CD8-positive, alpha-beta T cell (primary cell): ENCODE measurements at regions of chr10 and their contacts with region 1.

Region 1: GRCh38 chr10:132536971-132537712 is 445 bp upstream of the INPP5A start:
- DNase-seq: peak; percentile 99 to 100 (median 100)
- ATAC-seq: peak; percentile 89
- H3K4me3 ChIP-seq: peak overlapping the region; percentile 23 to 65
- H3K4me3 Mint-ChIP-seq: peak overlapping the region; percentile 79
- H3K27ac ChIP-seq: peak overlapping the region; percentile 39 to 56
- H3K27ac Mint-ChIP-seq: peak overlapping the region; percentile 75
- H3K4me1 ChIP-seq: peaks cover 49% of the 10 kb centered on the region
- H3K4me1 Mint-ChIP-seq: peaks cover 49% of the 10 kb centered on the region
- H3K27me3 ChIP-seq: peaks cover 0 to 2% of the 10 kb centered on the region in 2 experiments
- H3K27me3 Mint-ChIP-seq: no peaks in the 10 kb centered on the region
- CTCF ChIP-seq: peak; percentile 27

Region 2: DNA sequence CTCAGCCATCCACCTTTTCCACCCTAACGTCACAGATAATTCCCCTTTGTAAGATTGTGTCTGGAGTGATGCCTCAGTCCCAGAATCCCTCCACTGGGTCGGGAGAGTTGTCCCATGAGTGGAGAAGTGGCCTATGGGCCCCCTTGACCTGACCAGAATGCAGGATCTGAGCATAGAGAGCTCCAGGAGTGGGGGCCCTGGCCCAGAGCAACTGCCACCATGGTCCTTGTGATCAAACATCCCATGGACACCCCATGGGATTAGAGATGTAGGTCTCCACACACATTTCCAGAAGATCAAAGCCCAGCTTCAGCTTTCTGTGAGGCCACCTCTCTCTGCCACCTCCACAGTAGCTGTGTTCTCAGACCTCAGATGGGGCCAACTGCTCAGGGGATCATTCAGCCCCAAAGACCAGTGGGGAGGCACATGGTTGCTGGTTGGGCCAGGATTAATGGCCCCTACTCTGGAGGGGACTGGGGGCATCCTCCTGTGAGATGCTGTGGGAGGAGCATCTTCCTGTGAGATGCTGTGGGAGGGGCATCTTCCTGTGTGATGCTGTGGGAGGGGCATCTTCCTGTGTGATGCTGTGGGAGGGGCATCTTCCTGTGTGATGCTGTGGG is 378.9 kb before region 1 on chr10:
- CTCF ChIA-PET with region 1: no interaction called
- POLR2A ChIA-PET with region 1: no interaction called
- intact Hi-C with region 1: loop called in 1 of 2 experiments (anchors 2 kb)
- DNase-seq: peak in 5 of 9 experiments; percentile 21 to 74 (median 46)
- ATAC-seq: peak; percentile 20
- H3K4me3 ChIP-seq: no peak overlapping the region
- H3K4me3 Mint-ChIP-seq: no peak overlapping the region
- H3K27ac ChIP-seq: peak overlapping the region; percentile 98 to 99
- H3K27ac Mint-ChIP-seq: peak overlapping the region; percentile 87
- H3K4me1 ChIP-seq: peaks cover 30% of the 10 kb centered on the region
- H3K4me1 Mint-ChIP-seq: peaks cover 19% of the 10 kb centered on the region
- H3K27me3 ChIP-seq: no peaks in the 10 kb centered on the region
- H3K27me3 Mint-ChIP-seq: no peaks in the 10 kb centered on the region
- CTCF ChIP-seq: no peak

Region 3: GRCh38 chr10:132331526-132332432 is 205.4 kb before region 1 on chr10 and contains the start of gene LRRC27:
- CTCF ChIA-PET with region 1: no interaction called
- POLR2A ChIA-PET with region 1: no interaction called
- intact Hi-C with region 1: loop called (anchors 1 kb)
- DNase-seq: peak; percentile 99 to 100 (median 100)
- ATAC-seq: peak; percentile 90
- H3K4me3 ChIP-seq: peak within 1 kb of the TSS; percentile 77 to 90
- H3K4me3 Mint-ChIP-seq: peak within 1 kb of the TSS; percentile 84
- H3K27ac ChIP-seq: peak within 1 kb of the TSS; percentile 68 to 83
- H3K27ac Mint-ChIP-seq: peak within 1 kb of the TSS; percentile 91
- H3K4me1 ChIP-seq: peaks cover 31% of the 10 kb centered on the region
- H3K4me1 Mint-ChIP-seq: peaks cover 58% of the 10 kb centered on the region
- H3K27me3 ChIP-seq: no peaks in the 10 kb centered on the region
- H3K27me3 Mint-ChIP-seq: no peaks in the 10 kb centered on the region
- CTCF ChIP-seq: no peak
- total RNA-seq, gene LRRC27: 0.68 to 3.2 TPM

Region 4: DNA sequence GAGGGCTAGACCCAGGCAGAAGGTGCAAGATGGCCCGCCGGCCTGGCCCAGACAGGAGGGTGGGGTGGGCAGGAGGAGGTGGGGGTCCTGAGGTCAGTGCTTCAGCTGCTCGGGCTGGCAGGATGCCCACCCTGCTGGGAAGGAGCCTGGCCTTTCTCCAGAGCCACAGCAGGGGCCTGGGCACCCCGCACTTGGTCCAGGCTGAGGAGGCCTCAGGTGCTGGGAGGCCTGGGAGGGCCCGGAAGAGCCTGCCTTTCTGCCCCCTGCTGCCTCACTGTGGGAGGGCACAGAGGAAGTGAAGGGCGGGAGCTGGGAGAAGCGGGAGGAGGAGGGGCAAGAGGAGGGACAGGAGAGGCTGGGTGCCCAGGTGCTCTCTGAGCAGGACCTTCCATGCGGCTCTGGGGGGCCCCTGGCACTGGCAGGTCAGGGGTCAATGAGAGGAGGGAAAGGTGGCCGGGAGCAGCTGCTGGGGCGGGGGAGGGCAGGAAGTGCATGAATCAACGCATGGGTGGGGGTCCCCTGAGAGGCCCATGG is 90.4 kb before region 1 on chr10:
- CTCF ChIA-PET with region 1: no interaction called
- POLR2A ChIA-PET with region 1: no interaction called
- intact Hi-C with region 1: loop called (anchors 1 kb)
- DNase-seq: peak; percentile 31 to 89 (median 73)
- ATAC-seq: peak; percentile 36
- H3K4me3 ChIP-seq: peak overlapping the region; percentile 43 to 53
- H3K4me3 Mint-ChIP-seq: peak overlapping the region; percentile 71
- H3K27ac ChIP-seq: peak overlapping the region; percentile 87 to 99
- H3K27ac Mint-ChIP-seq: peak overlapping the region; percentile 98
- H3K4me1 ChIP-seq: peaks cover 58% of the 10 kb centered on the region
- H3K4me1 Mint-ChIP-seq: peaks cover 52% of the 10 kb centered on the region
- H3K27me3 ChIP-seq: no peaks in the 10 kb centered on the region
- H3K27me3 Mint-ChIP-seq: no peaks in the 10 kb centered on the region
- CTCF ChIP-seq: peak; percentile 30

Region 5: DNA sequence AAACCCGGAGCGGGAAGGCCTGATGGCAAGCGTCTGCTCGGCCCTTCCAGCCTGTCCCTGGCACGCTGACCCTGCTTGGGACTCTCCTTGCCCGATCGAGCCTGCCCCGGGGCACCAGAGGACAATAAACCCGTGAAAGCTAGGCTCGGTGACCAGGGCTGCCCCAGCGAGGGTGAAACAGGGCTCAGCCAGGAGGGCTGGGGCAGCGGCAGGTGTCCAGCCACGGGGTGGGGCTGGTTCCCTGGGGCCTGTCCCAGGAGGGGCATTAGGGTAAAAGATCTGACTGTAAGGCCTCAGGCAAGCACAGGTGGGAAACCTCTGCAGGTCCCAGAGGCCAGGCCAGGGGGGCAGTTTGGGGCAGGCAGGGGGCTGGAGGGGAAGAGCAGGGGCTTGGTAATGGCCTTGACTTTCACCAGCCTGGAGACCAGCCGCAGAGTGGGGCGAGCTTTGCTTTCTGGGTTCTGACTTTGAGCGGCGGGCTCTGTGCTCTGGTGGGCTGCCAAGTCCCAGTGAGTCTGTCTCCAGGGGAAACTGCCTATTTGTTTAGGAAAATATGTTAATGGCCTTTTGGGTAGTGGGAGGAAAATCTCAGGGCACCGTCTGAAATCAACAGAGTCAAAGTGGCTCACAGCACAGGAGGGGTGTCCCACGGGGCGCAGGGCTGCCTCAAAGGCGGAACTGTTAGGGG is 67.8 kb before region 1 on chr10:
- CTCF ChIA-PET with region 1: no interaction called
- POLR2A ChIA-PET with region 1: no interaction called
- intact Hi-C with region 1: no loop called
- DNase-seq: no peak
- ATAC-seq: no peak
- H3K4me3 ChIP-seq: no peak overlapping the region
- H3K4me3 Mint-ChIP-seq: no peak overlapping the region
- H3K27ac ChIP-seq: no peak overlapping the region
- H3K27ac Mint-ChIP-seq: no peak overlapping the region
- H3K4me1 ChIP-seq: no peaks in the 10 kb centered on the region
- H3K4me1 Mint-ChIP-seq: no peaks in the 10 kb centered on the region
- H3K27me3 ChIP-seq: no peaks in the 10 kb centered on the region
- H3K27me3 Mint-ChIP-seq: peaks cover 4% of the 10 kb centered on the region
- CTCF ChIP-seq: no peak

Region 6: GRCh38 chr10:132571650-132572535 is 34.8 kb after region 1 on chr10:
- CTCF ChIA-PET with region 1: interaction called, 3 read pairs
- POLR2A ChIA-PET with region 1: interaction called, 3 read pairs
- intact Hi-C with region 1: loop called in 1 of 2 experiments (anchors 5 kb)
- DNase-seq: peak in 8 of 9 experiments; percentile 37 to 69 (median 56)
- ATAC-seq: peak; percentile 70
- H3K4me3 ChIP-seq: no peak overlapping the region
- H3K4me3 Mint-ChIP-seq: peak overlapping the region; percentile 35
- H3K27ac ChIP-seq: no peak overlapping the region
- H3K27ac Mint-ChIP-seq: peak overlapping the region; percentile 41
- H3K4me1 ChIP-seq: peaks cover 36% of the 10 kb centered on the region
- H3K4me1 Mint-ChIP-seq: peaks cover 25% of the 10 kb centered on the region
- H3K27me3 ChIP-seq: no peaks in the 10 kb centered on the region
- H3K27me3 Mint-ChIP-seq: no peaks in the 10 kb centered on the region
- CTCF ChIP-seq: no peak

Region 7: GRCh38 chr10:133261726-133262325 is 724.7 kb after region 1 on chr10:
- CTCF ChIA-PET with region 1: no interaction called
- POLR2A ChIA-PET with region 1: no interaction called
- intact Hi-C with region 1: loop called in 1 of 2 experiments (anchors 5 kb)
- DNase-seq: peak; percentile 73 to 89 (median 82)
- ATAC-seq: peak; percentile 29
- H3K4me3 ChIP-seq: peak overlapping the region; percentile 61 to 68
- H3K4me3 Mint-ChIP-seq: peak overlapping the region; percentile 82
- H3K27ac ChIP-seq: peak overlapping the region; percentile 63 to 74
- H3K27ac Mint-ChIP-seq: peak overlapping the region; percentile 77
- H3K4me1 ChIP-seq: peaks cover 71% of the 10 kb centered on the region
- H3K4me1 Mint-ChIP-seq: peaks cover 66% of the 10 kb centered on the region
- H3K27me3 ChIP-seq: no peaks in the 10 kb centered on the region
- H3K27me3 Mint-ChIP-seq: no peaks in the 10 kb centered on the region
- CTCF ChIP-seq: no peak